A673 (cell line): ENCODE measurements at regions of chr9 and their contacts with region 1.

Region 1: DNA sequence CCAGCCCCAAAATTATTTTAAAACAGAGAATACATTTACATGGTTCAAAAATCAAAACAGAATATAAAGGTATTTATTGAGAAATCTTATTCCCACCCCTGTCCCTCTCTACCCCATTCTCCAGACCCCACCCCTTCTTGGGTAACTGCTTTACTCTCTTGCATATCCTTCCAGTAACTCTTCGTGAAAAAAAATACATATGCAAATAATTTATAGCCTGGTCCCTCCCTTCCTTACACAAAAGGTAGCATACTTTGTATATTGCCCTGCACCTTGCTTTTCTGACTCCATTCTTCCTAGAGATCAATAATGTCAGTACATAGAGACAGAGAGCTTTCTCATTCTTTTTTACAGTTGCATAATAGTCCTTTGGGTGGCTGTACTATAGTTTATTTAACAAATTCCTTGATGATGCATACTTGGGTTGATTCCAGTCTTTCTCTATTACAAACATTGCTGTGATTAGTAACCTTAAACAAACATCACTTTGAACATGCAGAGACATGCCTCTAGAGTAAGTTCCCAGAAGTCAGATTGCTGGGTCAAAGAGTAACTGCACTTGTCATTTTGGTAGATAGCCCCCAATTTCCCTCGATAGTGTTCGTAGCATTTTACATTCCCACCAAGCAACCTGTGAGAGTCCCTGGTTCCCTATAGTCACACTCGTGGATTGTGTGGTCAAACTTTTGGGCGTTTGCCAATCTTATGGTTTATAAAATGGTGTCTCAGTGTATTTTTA is 47.8 kb downstream of the STOM start:
- DNase-seq: no peak
- H3K4me3 ChIP-seq: no peak overlapping the region
- H3K27ac ChIP-seq: no peak overlapping the region
- H3K4me1 ChIP-seq: no peaks in the 10 kb centered on the region
- H3K27me3 ChIP-seq: no peaks in the 10 kb centered on the region
- CTCF ChIP-seq: no peak

Region 2: GRCh38 chr9:121376214-121376830 is 54.1 kb after region 1 on chr9:
- CTCF ChIA-PET with region 1: interaction called, 27 read pairs
- POLR2A ChIA-PET with region 1: no interaction called
- intact Hi-C with region 1: loop called (anchors 1 kb)
- DNase-seq: peak; percentile 36
- H3K4me3 ChIP-seq: no peak overlapping the region
- H3K27ac ChIP-seq: no peak overlapping the region
- H3K4me1 ChIP-seq: peaks cover 21% of the 10 kb centered on the region
- H3K27me3 ChIP-seq: no peaks in the 10 kb centered on the region
- CTCF ChIP-seq: peak; percentile 59

Region 3: GRCh38 chr9:121399883-121400607 is 77.8 kb after region 1 on chr9:
- CTCF ChIA-PET with region 1: interaction called, 9 read pairs
- POLR2A ChIA-PET with region 1: no interaction called
- intact Hi-C with region 1: loop called (anchors 1 kb)
- DNase-seq: peak; percentile 80
- H3K4me3 ChIP-seq: no peak overlapping the region
- H3K27ac ChIP-seq: no peak overlapping the region
- H3K4me1 ChIP-seq: no peaks in the 10 kb centered on the region
- H3K27me3 ChIP-seq: no peaks in the 10 kb centered on the region
- CTCF ChIP-seq: peak; percentile 70

Region 4: DNA sequence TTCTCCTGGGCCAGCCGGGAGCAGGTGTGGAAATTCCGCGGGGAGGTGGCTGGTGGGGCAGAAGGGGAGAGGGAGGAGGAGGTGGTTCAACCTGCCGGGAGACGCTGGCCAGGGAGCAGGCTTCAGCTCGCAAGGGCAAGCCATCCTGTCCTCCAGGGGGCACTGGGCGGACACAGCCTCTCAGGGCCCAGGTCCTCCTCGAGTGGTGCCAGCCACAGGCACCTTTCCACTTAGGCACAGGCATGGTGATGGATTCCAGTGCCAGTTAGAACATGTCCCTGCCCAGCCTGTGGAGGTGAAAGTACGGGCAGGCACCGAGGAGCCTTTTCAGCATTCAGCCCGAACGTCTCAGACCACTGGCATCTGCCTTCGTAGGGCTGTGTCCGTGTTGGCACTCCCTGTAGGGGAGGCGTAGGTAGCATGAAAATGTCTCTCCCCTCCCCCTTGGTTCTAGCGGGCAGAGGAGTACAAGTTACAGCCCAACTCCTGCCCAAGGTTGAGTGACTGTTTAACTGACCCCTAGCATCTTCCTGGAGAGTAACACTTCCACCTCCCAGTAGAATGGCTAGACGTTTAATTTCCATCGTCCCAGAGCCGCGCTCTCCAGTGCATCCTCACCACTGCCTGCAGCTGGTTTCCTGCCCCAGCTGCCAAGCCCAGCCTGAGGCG is 378.1 kb after region 1 on chr9:
- CTCF ChIA-PET with region 1: no interaction called
- POLR2A ChIA-PET with region 1: no interaction called
- intact Hi-C with region 1: no loop called
- DNase-seq: no peak
- H3K4me3 ChIP-seq: peak overlapping the region; percentile 55
- H3K27ac ChIP-seq: no peak overlapping the region
- H3K4me1 ChIP-seq: peaks cover 10% of the 10 kb centered on the region
- H3K27me3 ChIP-seq: no peaks in the 10 kb centered on the region
- CTCF ChIP-seq: no peak